ENCODE measurements at regions of chr7 and their contacts with region 1.

Region 1: DNA sequence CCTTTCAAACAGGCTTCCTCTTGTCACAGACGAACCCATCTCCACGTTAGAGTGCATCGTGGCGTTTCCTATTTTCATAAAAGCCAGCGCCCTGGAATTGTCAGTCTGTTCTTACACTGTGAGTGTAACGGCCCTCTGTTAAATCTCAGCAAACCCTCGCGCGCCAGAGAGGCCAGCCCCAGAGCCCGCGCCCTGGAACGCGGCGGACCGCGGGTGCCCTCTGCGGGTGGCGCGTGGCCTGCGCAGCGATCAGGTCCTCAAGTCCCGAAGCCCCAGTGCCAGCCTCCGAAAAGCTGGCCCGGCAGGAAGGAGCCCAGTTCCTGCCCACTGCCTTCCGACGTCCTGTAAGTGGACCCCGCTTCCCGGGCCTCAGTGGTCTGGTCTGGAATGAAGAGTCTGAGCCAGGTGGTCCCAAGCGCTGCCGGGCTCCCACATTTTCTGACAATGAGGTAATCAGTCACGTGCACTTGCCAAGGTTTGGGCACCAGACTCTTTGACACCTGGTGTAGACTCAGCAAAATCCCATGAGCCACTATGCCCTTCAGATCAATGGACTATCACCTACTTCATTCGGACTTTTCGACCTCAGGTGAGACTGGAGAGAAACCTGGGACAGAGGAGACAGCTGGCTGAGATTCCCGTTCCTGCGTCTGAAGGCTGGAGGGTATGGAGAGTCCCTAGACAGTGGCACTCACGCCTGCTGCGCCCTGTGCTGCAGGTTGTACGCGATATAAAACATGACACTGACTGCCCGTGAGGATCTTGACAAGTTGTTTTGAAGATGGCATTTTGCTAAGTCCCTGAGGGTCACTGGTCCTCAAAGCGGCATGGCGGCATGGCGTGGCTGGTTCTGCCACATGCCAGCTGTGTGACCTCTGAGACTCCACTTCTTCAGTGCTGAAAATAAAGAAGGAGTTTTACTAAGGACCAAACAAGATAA is 109.4 kb upstream of the LANCL2 start:
- DNase-seq: peak; percentile 87
- ATAC-seq: peak; percentile 94
- H3K4me3 Mint-ChIP-seq: peak overlapping the region; percentile 75
- H3K27ac Mint-ChIP-seq: peak overlapping the region; percentile 49
- H3K4me1 Mint-ChIP-seq: peaks cover 6% of the 10 kb centered on the region
- H3K27me3 Mint-ChIP-seq: peaks cover 50% of the 10 kb centered on the region

Region 2: DNA sequence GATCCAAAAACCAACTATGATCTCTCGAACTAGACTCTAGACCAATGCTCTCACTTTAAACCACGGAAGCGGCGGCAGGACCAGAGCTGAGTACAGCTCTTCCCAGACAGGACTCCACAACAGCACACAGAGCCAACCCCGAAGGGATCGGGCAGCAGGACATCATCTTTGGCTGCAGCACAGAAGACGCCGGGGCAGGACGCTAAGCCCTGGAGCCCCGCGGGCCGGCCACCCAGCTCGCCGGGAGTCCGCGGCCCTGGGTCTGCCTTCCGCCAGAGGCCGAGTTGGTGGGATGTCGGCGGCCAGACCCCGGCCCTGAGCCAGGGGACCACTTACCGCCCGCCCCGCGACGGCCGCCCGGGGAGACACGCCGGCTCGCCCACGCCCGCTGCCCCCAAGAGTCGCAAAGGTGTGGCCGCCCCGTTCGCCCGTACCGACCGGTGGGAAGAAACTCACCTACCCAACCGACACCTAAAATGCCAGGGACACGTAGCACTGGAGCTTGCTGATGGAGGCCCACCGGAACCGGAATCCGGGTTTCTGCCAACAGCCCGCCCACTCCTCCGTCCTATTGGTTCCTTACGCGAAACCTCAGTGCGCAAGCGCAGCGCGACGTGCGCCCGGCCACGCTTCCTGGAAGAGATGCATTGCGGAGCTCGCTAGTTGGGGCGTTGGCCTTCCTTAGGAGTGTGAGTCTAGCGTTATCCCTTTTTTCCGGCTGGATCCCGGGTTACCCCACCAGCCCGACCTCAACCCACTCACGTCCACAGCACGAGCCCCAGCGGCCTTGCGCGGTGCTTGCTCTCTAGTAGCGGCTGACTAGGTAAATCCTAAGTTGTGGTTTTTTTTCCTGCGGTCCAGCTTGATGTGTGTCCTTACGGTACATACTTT is 496.8 kb before region 1 on chr7 and contains the start of gene SEC61G:
- CTCF ChIA-PET with region 1: interaction called, 27 read pairs
- POLR2A ChIA-PET with region 1: no interaction called
- intact Hi-C with region 1: loop called in 1 of 2 experiments (anchors 1 kb)
- DNase-seq: peak; percentile 97
- ATAC-seq: peak; percentile 91
- H3K4me3 Mint-ChIP-seq: peak within 1 kb of the TSS; percentile 91
- H3K27ac Mint-ChIP-seq: peak within 1 kb of the TSS; percentile 95
- H3K4me1 Mint-ChIP-seq: peaks cover 20% of the 10 kb centered on the region
- H3K27me3 Mint-ChIP-seq: peaks cover 2% of the 10 kb centered on the region
- total RNA-seq, gene SEC61G: 78.4 to 191 TPM

Region 3: GRCh38 chr7:54788664-54789063 is 467.1 kb before region 1 on chr7:
- CTCF ChIA-PET with region 1: interaction called, 23 read pairs
- POLR2A ChIA-PET with region 1: no interaction called
- intact Hi-C with region 1: loop called (anchors 1 kb)
- DNase-seq: peak; percentile 68
- ATAC-seq: peak; percentile 100
- H3K4me3 Mint-ChIP-seq: no peak overlapping the region
- H3K27ac Mint-ChIP-seq: no peak overlapping the region
- H3K4me1 Mint-ChIP-seq: peaks cover 6% of the 10 kb centered on the region
- H3K27me3 Mint-ChIP-seq: peaks cover 38% of the 10 kb centered on the region

Region 4: DNA sequence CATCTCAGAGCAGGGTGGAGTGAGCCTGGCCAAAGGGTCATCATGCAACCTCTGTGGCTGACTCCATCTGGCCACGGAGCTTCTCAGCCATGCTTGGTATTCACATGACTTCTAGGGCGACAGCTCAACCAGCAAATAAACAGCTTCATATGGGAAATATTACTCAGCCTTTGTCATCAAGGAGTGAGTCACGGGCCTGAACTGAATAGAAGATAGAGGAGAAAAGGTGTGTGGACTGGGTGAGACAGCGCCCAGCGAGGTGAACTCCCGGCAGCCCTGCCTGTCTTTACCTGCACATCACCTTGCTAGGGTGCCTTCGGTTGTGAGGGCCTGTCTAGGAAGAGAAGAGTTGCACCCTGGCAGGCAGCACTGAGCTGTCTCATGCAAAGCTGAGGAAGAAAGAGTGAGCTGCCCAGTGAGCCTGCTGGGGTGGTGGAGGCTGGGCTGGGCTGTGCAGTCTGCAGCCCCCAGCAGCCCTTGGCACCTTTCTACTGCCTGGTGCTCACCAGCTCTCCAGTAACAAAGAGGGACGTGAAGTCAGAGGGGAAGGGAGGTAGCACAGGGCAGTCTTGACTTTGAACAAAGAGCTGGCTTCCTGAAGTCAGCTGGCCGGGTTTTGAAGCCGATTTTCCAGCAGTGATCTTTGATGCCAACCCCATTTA is 122.7 kb before region 1 on chr7:
- CTCF ChIA-PET with region 1: interaction called, 3 read pairs
- POLR2A ChIA-PET with region 1: no interaction called
- intact Hi-C with region 1: loop called (anchors 5 to 10 kb)
- DNase-seq: peak; percentile 63
- ATAC-seq: peak; percentile 82
- H3K4me3 Mint-ChIP-seq: no peak overlapping the region
- H3K27ac Mint-ChIP-seq: peak overlapping the region; percentile 72
- H3K4me1 Mint-ChIP-seq: peaks cover 38% of the 10 kb centered on the region
- H3K27me3 Mint-ChIP-seq: peaks cover 16% of the 10 kb centered on the region

Region 5: GRCh38 chr7:55185941-55186609 is 69.7 kb before region 1 on chr7:
- CTCF ChIA-PET with region 1: no interaction called
- POLR2A ChIA-PET with region 1: no interaction called
- intact Hi-C with region 1: loop called in 1 of 2 experiments (anchors 10 kb)
- DNase-seq: peak; percentile 16
- ATAC-seq: peak; percentile 68
- H3K4me3 Mint-ChIP-seq: no peak overlapping the region
- H3K27ac Mint-ChIP-seq: no peak overlapping the region
- H3K4me1 Mint-ChIP-seq: no peaks in the 10 kb centered on the region
- H3K27me3 Mint-ChIP-seq: peaks cover 22% of the 10 kb centered on the region

Region 6: GRCh38 chr7:55271069-55271626 is 15.4 kb after region 1 on chr7:
- CTCF ChIA-PET with region 1: interaction called, 13 read pairs
- POLR2A ChIA-PET with region 1: interaction called, 4 read pairs
- intact Hi-C with region 1: no loop called
- DNase-seq: no peak
- ATAC-seq: no peak
- H3K4me3 Mint-ChIP-seq: no peak overlapping the region
- H3K27ac Mint-ChIP-seq: no peak overlapping the region
- H3K4me1 Mint-ChIP-seq: no peaks in the 10 kb centered on the region
- H3K27me3 Mint-ChIP-seq: peaks cover 2% of the 10 kb centered on the region

Region 7: DNA sequence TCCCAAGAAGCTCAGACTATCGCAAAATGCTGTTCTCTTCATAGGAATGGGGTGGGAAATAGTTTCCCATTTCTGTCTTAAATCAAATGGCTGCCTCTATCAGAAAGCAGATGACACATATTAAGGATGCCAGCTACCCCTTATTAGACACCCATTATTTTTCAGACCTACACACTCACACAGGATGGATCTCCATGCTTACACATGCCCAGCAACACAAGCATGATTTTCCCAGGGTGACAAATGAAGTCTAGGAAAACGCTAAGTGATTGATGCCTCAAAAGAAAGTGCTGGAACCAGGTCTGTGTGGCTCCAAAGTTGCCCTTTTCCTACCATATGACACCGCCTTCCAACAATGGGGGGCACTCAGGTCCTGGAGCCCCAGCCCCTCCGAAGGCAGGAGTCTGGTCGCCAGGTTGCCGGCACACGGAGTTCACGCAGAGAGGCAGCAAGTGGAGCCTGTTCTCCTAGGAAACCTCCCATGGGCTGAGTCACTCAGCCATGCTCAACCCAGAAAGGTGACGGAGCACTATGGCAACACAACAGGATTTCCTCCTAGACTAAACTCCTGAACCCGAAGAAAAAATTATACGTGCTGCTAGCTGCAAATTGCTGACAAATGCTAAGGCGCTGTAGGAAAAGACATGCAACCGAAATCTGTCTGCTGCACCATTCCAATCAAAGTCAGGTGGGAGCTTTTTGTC is 296.7 kb after region 1 on chr7:
- CTCF ChIA-PET with region 1: no interaction called
- POLR2A ChIA-PET with region 1: no interaction called
- intact Hi-C with region 1: no loop called
- DNase-seq: no peak
- ATAC-seq: no peak
- H3K4me3 Mint-ChIP-seq: no peak overlapping the region
- H3K27ac Mint-ChIP-seq: no peak overlapping the region
- H3K4me1 Mint-ChIP-seq: peaks cover 96% of the 10 kb centered on the region
- H3K27me3 Mint-ChIP-seq: no peaks in the 10 kb centered on the region